H1 (cell line): ENCODE measurements at regions of chr5 and their contacts with region 1.

Region 1: DNA sequence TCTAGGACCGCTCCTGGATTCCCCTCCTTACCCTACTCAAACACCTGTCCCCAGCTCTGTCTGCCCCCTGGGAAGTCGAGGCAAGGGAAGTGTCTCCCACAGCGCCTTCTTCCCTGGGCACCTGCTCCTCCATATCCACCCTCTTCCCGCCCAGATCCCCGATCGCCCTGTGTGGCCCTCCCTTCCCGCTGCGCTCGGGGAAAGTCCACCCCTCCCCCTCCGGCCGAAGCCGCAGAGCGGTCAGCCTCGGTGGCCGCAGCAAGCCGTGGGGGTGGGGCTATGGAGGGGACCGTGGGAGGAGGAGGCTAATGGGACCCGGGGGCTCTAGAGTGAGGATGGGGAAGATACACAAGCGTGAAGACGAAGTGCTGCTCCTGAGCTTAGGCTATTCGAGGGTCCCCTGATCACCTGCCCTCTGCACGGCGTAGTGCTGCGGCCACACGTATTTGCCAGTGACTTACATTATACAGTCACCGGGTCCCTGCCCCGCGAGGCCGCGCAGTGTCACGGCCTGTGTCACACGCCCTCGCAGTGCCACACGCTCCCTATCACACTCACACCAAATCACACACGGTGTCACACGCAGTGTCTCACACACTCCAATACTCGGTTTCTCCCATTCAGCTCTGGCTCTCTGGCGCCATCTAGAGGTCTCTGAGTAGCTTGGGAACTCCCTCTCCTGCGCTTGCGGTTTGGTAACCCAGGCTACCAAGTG is 658 bp upstream of the PCDH1 start:
- DNase-seq: peak in 1 of 2 experiments; percentile 92
- H3K4me3 ChIP-seq: peak overlapping the region; percentile 49 to 81 (median 66)
- H3K27ac ChIP-seq: peak overlapping the region; percentile 75
- H3K4me1 ChIP-seq: peaks cover 24 to 64% (median 47%) of the 10 kb centered on the region in 4 experiments
- H3K27me3 ChIP-seq: peaks cover 0 to 4% (median 0%) of the 10 kb centered on the region in 4 experiments; a peak in 1 of 7 replicates
- CTCF ChIP-seq: peak in 2 of 3 experiments; percentile 87 to 98; a peak in 3 of 4 replicates
- EP300 ChIP-seq: no peak
- POLR2A ChIP-seq: no peak; a peak in 1 of 3 replicates
- RAD21 ChIP-seq: peak; percentile 92 to 94

Region 2: DNA sequence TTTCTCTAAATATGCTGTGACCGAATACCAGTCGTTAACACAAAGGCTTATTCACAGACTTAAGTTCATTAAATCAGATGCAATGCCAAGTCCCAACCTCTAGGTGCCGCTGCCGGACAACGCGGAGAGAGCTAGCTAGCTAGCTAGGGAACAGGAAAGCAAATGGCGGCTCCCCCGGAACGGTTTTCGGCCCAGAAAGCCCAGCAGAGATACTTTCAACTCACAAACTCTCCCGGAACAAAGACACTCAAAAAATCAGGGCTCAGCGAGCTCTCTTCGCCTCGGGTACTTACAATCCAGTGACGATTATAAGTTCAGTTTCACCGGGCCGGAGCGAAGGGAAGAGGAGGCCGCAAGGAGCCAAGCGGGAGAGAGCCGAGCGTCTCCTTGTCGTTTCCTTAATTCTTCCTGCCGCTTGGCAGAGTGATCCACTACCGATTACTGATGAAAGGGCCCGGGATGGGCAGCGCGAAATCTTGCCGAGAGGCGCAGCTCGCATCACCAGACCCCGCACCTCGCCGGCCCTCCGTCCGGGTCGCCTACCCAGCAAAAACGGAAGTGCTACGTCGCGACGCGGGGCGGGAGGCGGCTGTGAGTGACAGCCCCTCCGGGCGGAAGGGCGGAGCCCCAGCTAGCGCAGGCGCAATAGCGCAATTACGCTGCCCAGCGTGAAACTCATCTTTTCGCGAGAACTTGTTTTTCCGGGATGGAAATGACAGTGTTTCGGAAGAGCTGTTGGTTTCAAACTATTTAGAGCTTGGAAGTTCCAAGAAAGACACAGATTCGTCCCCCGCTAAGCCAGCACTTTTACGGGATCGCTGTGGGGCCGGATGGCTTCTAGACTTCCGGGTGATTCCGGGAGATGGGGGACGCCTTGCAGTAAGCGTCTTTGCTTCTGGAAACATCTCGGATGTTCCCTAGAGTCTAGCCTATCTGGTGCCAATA is 558.4 kb before region 1 on chr5 and contains the start of gene TAF7:
- CTCF ChIA-PET with region 1: no interaction called
- POLR2A ChIA-PET with region 1: no interaction called
- DNase-seq: peak; percentile 77 to 95
- H3K4me3 ChIP-seq: peak within 1 kb of the TSS; percentile 79 to 99 (median 92)
- H3K27ac ChIP-seq: peak within 1 kb of the TSS; percentile 95
- H3K4me1 ChIP-seq: no peaks in the 10 kb centered on the region
- H3K27me3 ChIP-seq: no peaks in the 10 kb centered on the region
- CTCF ChIP-seq: peak; percentile 77 to 93 (median 80)
- EP300 ChIP-seq: no peak
- POLR2A ChIP-seq: peak; percentile 95 to 98
- RAD21 ChIP-seq: peak; percentile 45 to 57
- total RNA-seq, gene TAF7: 99.4 and 101 TPM in 2 replicates

Region 3: GRCh38 chr5:141681695-141682641 is 196.9 kb before region 1 on chr5 and contains the start of gene ARAP3:
- CTCF ChIA-PET with region 1: interaction called, 22 read pairs
- POLR2A ChIA-PET with region 1: interaction called, 8 read pairs
- DNase-seq: peak in 1 of 2 experiments; percentile 88
- H3K4me3 ChIP-seq: peak within 1 kb of the TSS; percentile 60 to 73 (median 67)
- H3K27ac ChIP-seq: peak within 1 kb of the TSS; percentile 37; the same call in 1 of the 2 replicates
- H3K4me1 ChIP-seq: peaks cover 10 to 29% (median 20%) of the 10 kb centered on the region in 4 experiments
- H3K27me3 ChIP-seq: no peaks in the 10 kb centered on the region
- CTCF ChIP-seq: no peak
- EP300 ChIP-seq: no peak
- POLR2A ChIP-seq: no peak
- RAD21 ChIP-seq: no peak
- total RNA-seq, gene ARAP3: 45.7 and 48.6 TPM in 2 replicates

Region 4: DNA sequence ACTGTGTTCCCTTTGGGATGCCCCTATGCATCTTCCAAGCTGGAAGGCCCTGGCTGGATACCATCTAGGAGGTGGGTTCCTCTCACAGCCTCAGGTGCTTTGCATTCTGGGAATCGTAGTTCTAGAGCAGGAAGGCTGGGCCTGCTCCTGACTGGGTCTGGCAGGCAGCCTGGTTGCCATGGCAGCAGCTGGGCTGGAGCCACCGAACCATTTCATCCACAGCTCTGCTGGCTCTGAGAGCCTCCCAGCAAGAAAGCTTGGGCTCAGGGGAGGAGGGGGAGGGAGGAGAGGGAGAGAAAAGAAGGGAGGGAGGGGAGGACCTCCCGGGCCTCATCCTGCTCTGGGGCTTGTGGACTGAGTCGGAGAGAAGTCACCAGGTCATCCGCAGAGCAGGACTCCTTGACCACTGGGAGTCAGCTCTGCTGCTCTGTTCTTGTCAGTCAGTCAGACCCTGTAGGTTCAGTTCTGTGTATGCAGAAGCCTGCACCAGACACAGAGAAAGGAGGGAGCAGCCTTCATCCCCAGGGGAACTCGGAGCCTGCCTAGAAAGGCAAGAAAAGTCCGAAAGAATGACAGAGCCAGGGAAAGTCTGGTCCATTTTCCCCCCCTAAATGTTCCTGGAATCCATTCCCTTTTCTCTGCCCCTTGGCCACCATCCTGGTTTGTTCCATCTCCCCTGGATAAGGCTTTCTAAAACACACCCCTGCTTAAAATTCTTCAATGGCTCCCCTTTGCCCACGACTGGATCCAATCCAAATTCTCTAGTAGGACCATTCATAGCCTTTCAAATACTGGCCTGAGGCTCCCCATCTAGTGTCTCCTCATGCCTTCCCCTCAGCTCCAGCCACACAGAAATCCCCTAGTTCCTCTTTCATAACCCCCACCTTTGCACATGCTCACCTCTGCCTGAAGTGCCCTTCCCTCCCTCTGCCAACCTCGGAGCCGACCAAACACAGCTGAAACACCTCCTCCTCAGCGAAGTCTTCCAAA is 131.4 kb before region 1 on chr5:
- CTCF ChIA-PET with region 1: interaction called, 221 read pairs
- POLR2A ChIA-PET with region 1: interaction called, 15 read pairs
- DNase-seq: peak; percentile 50 to 80
- H3K4me3 ChIP-seq: no peak overlapping the region; a peak in 1 of 8 replicates
- H3K27ac ChIP-seq: no peak overlapping the region
- H3K4me1 ChIP-seq: peaks cover 0 to 9% (median 5%) of the 10 kb centered on the region in 4 experiments; a peak in 5 of 7 replicates
- H3K27me3 ChIP-seq: peaks cover 4 to 10% (median 4%) of the 10 kb centered on the region in 4 experiments
- CTCF ChIP-seq: no peak
- EP300 ChIP-seq: no peak
- POLR2A ChIP-seq: no peak
- RAD21 ChIP-seq: no peak

Region 5: GRCh38 chr5:141788296-141788970 is 90.4 kb before region 1 on chr5:
- CTCF ChIA-PET with region 1: interaction called, 18 read pairs
- POLR2A ChIA-PET with region 1: interaction called, 3 read pairs
- DNase-seq: no peak
- H3K4me3 ChIP-seq: no peak overlapping the region
- H3K27ac ChIP-seq: no peak overlapping the region
- H3K4me1 ChIP-seq: peaks cover 0 to 10% (median 5%) of the 10 kb centered on the region in 4 experiments; a peak in 6 of 7 replicates
- H3K27me3 ChIP-seq: no peaks in the 10 kb centered on the region
- CTCF ChIP-seq: peak in 2 of 3 experiments; percentile 25 to 32; a peak in 2 of 4 replicates
- EP300 ChIP-seq: no peak
- POLR2A ChIP-seq: no peak
- RAD21 ChIP-seq: peak; percentile 54 to 59

Region 6: DNA sequence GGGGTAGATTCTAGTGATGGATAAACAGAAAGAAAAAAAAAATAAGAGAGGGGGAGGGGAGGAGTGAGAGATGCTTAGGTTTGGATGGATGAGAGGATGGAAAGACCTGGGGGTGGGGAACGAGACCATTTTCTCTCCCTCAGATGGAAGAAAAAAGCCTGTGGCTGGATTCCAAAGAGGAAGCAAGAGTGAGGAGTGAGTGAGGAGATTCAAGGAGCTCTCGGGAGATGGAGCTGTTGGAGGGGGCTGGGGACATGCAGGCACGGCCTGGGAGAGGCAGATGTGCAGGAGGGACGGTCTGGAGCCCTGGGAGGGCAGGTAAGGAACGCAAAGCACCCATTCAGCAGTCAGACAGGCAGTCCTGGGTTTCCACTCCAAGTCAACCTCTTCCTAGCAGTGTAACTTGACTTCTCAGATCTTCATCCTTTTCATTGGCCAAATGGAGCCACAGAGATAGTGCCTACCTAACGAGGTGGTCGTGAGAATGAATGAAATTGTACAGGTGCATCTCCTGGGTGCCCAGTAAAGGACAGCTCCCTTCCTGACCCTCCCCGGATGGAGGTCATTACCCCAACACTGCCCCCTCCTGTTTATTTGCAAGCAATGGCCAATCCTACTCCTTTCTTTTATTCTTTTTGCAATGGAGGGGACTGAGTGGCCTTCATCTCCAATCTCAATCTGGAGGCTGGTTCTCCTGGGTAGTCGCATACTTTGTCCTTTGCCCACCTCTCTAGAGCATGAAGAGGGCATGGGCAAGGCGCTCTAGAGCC is 52.9 kb before region 1 on chr5:
- CTCF ChIA-PET with region 1: interaction called, 265 read pairs
- POLR2A ChIA-PET with region 1: interaction called, 160 read pairs
- DNase-seq: no peak
- H3K4me3 ChIP-seq: no peak overlapping the region
- H3K27ac ChIP-seq: no peak overlapping the region
- H3K4me1 ChIP-seq: peaks cover 10 to 26% (median 16%) of the 10 kb centered on the region in 4 experiments
- H3K27me3 ChIP-seq: no peaks in the 10 kb centered on the region
- CTCF ChIP-seq: peak; percentile 56 to 70 (median 65)
- EP300 ChIP-seq: no peak
- POLR2A ChIP-seq: no peak
- RAD21 ChIP-seq: peak; percentile 64 to 74

Region 7: GRCh38 chr5:141866149-141867120 is 12.4 kb before region 1 on chr5:
- CTCF ChIA-PET with region 1: interaction called, 200 read pairs
- POLR2A ChIA-PET with region 1: interaction called, 210 read pairs
- DNase-seq: no peak
- H3K4me3 ChIP-seq: no peak overlapping the region
- H3K27ac ChIP-seq: no peak overlapping the region
- H3K4me1 ChIP-seq: peaks cover 14 to 21% (median 15%) of the 10 kb centered on the region in 4 experiments
- H3K27me3 ChIP-seq: no peaks in the 10 kb centered on the region
- CTCF ChIP-seq: no peak
- EP300 ChIP-seq: no peak
- POLR2A ChIP-seq: no peak
- RAD21 ChIP-seq: no peak

Region 8: GRCh38 chr5:141960449-141961202 is 81.8 kb after region 1 on chr5:
- CTCF ChIA-PET with region 1: interaction called, 94 read pairs
- POLR2A ChIA-PET with region 1: interaction called, 8 read pairs
- DNase-seq: peak; percentile 50 to 92
- H3K4me3 ChIP-seq: no peak overlapping the region
- H3K27ac ChIP-seq: no peak overlapping the region
- H3K4me1 ChIP-seq: peaks cover 2 to 9% (median 9%) of the 10 kb centered on the region in 4 experiments; a peak in 6 of 7 replicates
- H3K27me3 ChIP-seq: no peaks in the 10 kb centered on the region; a peak in 1 of 7 replicates
- CTCF ChIP-seq: peak; percentile 80 to 91 (median 88)
- EP300 ChIP-seq: no peak
- POLR2A ChIP-seq: no peak
- RAD21 ChIP-seq: peak; percentile 87

Region 9: DNA sequence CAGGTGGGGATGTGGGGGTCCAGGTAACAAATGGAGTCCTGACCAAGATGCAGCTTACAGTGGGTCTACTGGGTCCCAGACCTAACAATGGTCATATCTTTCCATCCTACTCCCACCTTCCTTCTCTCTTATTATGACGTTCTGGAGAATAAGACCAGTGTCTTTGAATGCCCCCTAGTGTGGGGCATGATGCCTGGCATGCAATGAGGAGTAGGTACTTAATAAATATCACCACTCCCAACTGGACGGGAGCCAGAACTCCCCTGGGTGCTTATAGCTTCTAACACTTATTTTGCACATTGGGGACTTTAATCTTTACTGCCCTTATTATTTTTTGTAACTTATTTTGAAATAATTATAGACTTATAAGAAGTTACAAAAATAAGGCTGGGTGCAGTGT is 327.9 kb after region 1 on chr5:
- CTCF ChIA-PET with region 1: no interaction called
- POLR2A ChIA-PET with region 1: no interaction called
- DNase-seq: no peak
- H3K4me3 ChIP-seq: no peak overlapping the region
- H3K27ac ChIP-seq: no peak overlapping the region
- H3K4me1 ChIP-seq: peaks cover 0 to 9% (median 3%) of the 10 kb centered on the region in 4 experiments
- H3K27me3 ChIP-seq: no peaks in the 10 kb centered on the region; a peak in 1 of 7 replicates
- CTCF ChIP-seq: peak in 2 of 3 experiments; percentile 18 to 27; a peak in 2 of 4 replicates
- EP300 ChIP-seq: no peak
- POLR2A ChIP-seq: no peak
- RAD21 ChIP-seq: peak; percentile 28 to 45; a peak in 3 of 4 replicates